Activated CD8-positive, alpha-beta T cell treated with anti-CD3 and anti-CD28 coated beads, Interleukin-2, amount 10 ng/mL, durations not matched to agents 7 days and 5 days (primary cell): ENCODE measurements at regions of chr1 and their contacts with region 1.

Region 1: GRCh38 chr1:100459358-100460114 is 78.4 kb upstream of the GPR88 start:
- DNase-seq: peak; percentile 79
- ATAC-seq: peak; percentile 80
- H3K4me3 Mint-ChIP-seq: no peak overlapping the region
- H3K27ac Mint-ChIP-seq: no peak overlapping the region
- H3K4me1 Mint-ChIP-seq: peaks cover 37% of the 10 kb centered on the region
- H3K27me3 Mint-ChIP-seq: no peaks in the 10 kb centered on the region

Region 2: GRCh38 chr1:100198596-100198995 is 260.9 kb before region 1 on chr1:
- CTCF ChIA-PET with region 1: no interaction called
- POLR2A ChIA-PET with region 1: no interaction called
- DNase-seq: no peak
- ATAC-seq: no peak
- H3K4me3 Mint-ChIP-seq: no peak overlapping the region
- H3K27ac Mint-ChIP-seq: no peak overlapping the region
- H3K4me1 Mint-ChIP-seq: no peaks in the 10 kb centered on the region
- H3K27me3 Mint-ChIP-seq: no peaks in the 10 kb centered on the region

Region 3: GRCh38 chr1:100351095-100351891 is 108.2 kb before region 1 on chr1:
- CTCF ChIA-PET with region 1: interaction called, 46 read pairs
- POLR2A ChIA-PET with region 1: interaction called, 6 read pairs
- DNase-seq: peak; percentile 90
- ATAC-seq: peak; percentile 78
- H3K4me3 Mint-ChIP-seq: peak overlapping the region; percentile 96
- H3K27ac Mint-ChIP-seq: peak overlapping the region; percentile 99
- H3K4me1 Mint-ChIP-seq: peaks cover 31% of the 10 kb centered on the region
- H3K27me3 Mint-ChIP-seq: no peaks in the 10 kb centered on the region

Region 4: GRCh38 chr1:100387209-100387608 is 72.3 kb before region 1 on chr1:
- CTCF ChIA-PET with region 1: interaction called, 19 read pairs
- POLR2A ChIA-PET with region 1: interaction called, 3 read pairs
- DNase-seq: no peak
- ATAC-seq: no peak
- H3K4me3 Mint-ChIP-seq: peak overlapping the region; percentile 66
- H3K27ac Mint-ChIP-seq: peak overlapping the region; percentile 78
- H3K4me1 Mint-ChIP-seq: peaks cover 68% of the 10 kb centered on the region
- H3K27me3 Mint-ChIP-seq: no peaks in the 10 kb centered on the region

Region 5: DNA sequence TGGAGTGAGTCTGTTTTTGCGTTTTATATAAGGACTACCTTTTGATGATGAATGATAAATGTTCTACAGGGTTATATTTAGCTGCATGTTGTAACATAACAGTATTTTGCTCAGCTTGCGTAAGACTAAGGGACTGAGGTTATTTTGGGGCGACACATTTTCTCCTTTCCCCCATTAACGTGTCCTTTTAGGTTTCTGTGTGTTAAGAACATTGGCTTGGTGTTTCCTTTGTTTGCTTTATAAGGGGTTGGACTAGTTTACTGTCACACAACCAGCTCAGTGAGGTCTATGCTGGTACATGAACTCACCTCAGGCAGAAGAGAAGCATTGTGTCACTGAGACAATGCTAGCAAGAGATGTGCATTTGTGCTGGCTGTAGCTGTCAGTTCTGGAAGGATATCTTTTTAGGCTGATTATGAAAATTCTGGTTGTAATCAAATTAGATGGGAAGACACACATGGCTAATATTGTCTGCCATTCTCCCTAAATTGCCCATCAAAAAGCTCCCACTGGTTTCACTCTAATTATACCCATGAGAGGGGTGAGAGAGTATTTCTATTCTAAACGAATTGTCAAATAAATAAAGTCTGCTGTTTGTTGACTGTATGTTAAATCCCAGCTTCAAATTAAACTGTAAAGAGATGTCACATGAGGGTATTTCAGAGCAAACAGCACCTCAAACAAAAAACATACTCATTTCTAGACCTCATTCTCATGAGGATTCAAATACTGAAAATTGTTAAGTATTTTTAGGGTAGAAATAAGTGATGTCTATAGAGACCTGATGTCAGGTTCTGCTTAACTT is 44.6 kb before region 1 on chr1:
- CTCF ChIA-PET with region 1: interaction called, 20 read pairs
- POLR2A ChIA-PET with region 1: no interaction called
- DNase-seq: no peak
- ATAC-seq: peak; percentile 56
- H3K4me3 Mint-ChIP-seq: no peak overlapping the region
- H3K27ac Mint-ChIP-seq: peak overlapping the region; percentile 60
- H3K4me1 Mint-ChIP-seq: peaks cover 45% of the 10 kb centered on the region
- H3K27me3 Mint-ChIP-seq: no peaks in the 10 kb centered on the region

Region 6: GRCh38 chr1:100443811-100444571 is 15.5 kb before region 1 on chr1:
- CTCF ChIA-PET with region 1: interaction called, 18 read pairs
- POLR2A ChIA-PET with region 1: interaction called, 4 read pairs
- DNase-seq: peak; percentile 43
- ATAC-seq: peak; percentile 48
- H3K4me3 Mint-ChIP-seq: peak overlapping the region; percentile 60
- H3K27ac Mint-ChIP-seq: peak overlapping the region; percentile 90
- H3K4me1 Mint-ChIP-seq: peaks cover 81% of the 10 kb centered on the region
- H3K27me3 Mint-ChIP-seq: no peaks in the 10 kb centered on the region

Region 7: GRCh38 chr1:100530880-100531487 is 71.4 kb after region 1 on chr1:
- CTCF ChIA-PET with region 1: interaction called, 10 read pairs
- POLR2A ChIA-PET with region 1: no interaction called
- DNase-seq: peak; percentile 61
- ATAC-seq: peak; percentile 95
- H3K4me3 Mint-ChIP-seq: peak overlapping the region; percentile 42
- H3K27ac Mint-ChIP-seq: peak overlapping the region; percentile 76
- H3K4me1 Mint-ChIP-seq: peaks cover 40% of the 10 kb centered on the region
- H3K27me3 Mint-ChIP-seq: peaks cover 18% of the 10 kb centered on the region